ENCODE measurements at regions of chr1 and their contacts with region 1.

Region 1: GRCh38 chr1:211017075-211017748 is 116.7 kb downstream of the KCNH1 start:
- DNase-seq: no peak
- H3K4me3 ChIP-seq: no peak overlapping the region
- H3K27ac ChIP-seq: no peak overlapping the region
- H3K4me1 ChIP-seq: no peaks in the 10 kb centered on the region
- CTCF ChIP-seq: no peak

Region 2: GRCh38 chr1:211099393-211099792 is 82.2 kb after region 1 on chr1:
- CTCF ChIA-PET with region 1: interaction called, 10 read pairs
- POLR2A ChIA-PET with region 1: no interaction called
- intact Hi-C with region 1: no loop called
- DNase-seq: no peak
- H3K4me3 ChIP-seq: no peak overlapping the region
- H3K27ac ChIP-seq: no peak overlapping the region
- H3K4me1 ChIP-seq: no peaks in the 10 kb centered on the region
- CTCF ChIP-seq: no peak

Region 3: DNA sequence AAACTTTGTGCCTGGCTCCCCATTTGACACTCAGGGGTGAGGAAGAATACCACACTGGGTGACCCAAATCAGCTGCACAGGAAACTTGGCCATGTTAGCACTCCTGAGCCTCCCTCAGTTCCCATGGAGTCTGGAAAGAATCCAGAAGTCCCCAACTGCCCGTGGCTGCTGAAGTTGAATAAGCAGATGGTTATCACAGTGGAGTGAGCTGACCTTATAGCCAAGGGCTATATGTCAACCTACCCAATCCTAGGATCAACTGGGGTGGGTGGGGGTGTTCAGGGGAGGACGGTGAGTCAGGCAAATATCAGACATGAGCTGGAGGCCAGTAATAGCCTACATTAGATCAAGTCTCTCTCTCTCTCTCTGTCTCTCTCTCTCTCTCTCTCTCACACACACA is 96.4 kb after region 1 on chr1:
- CTCF ChIA-PET with region 1: no interaction called
- POLR2A ChIA-PET with region 1: no interaction called
- intact Hi-C with region 1: no loop called
- DNase-seq: no peak
- H3K4me3 ChIP-seq: no peak overlapping the region
- H3K27ac ChIP-seq: no peak overlapping the region
- H3K4me1 ChIP-seq: no peaks in the 10 kb centered on the region
- CTCF ChIP-seq: no peak

Region 4: GRCh38 chr1:211775170-211775569 is 758.0 kb after region 1 on chr1:
- CTCF ChIA-PET with region 1: no interaction called
- POLR2A ChIA-PET with region 1: no interaction called
- intact Hi-C with region 1: no loop called
- DNase-seq: no peak
- H3K4me3 ChIP-seq: no peak overlapping the region
- H3K27ac ChIP-seq: no peak overlapping the region
- H3K4me1 ChIP-seq: no peaks in the 10 kb centered on the region
- CTCF ChIP-seq: no peak

Measured in OCI-LY7 (cell line).